K562 (cell line): ENCODE measurements at regions of chr19 and their contacts with region 1.

Region 1: GRCh38 chr19:7674010-7675005 is 2.6 kb upstream of the MCEMP1 start:
- DNase-seq: peak; percentile 79 to 90 (median 85)
- ATAC-seq: peak; percentile 98
- H3K4me3 ChIP-seq: no peak overlapping the region
- H3K27ac ChIP-seq: no peak overlapping the region
- H3K4me1 ChIP-seq: peaks cover 4 to 10% of the 10 kb centered on the region in 2 experiments; a peak in 3 of 5 replicates
- H3K27me3 ChIP-seq: peaks cover 9 to 29% of the 10 kb centered on the region in 2 experiments; a peak in 4 of 5 replicates
- CTCF ChIP-seq: no peak
- EP300 ChIP-seq: no peak
- POLR2A ChIP-seq: no peak
- RAD21 ChIP-seq: no peak

Region 2: DNA sequence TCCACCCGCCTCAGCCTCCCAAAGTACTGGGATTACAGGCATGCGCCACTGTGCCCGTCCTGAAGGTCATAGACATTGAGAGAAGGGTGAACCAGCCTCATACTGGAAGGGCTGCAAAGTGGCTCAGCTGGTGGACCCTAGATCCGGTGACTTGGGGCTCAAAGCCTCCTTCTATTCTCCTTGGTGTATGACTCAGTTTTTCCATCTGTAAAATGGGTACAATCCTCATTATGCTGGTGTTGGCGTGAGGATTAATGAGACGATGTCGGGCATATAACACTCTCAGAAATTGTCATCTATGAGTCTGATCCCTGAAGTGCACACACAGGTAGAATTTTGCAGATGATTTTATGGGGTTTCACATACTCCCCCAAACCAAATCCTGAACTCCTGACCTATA is 84.5 kb before region 1 on chr19:
- CTCF ChIA-PET with region 1: interaction called, 4 read pairs
- POLR2A ChIA-PET with region 1: no interaction called
- in situ Hi-C with region 1: loop called (anchors 5 kb)
- intact Hi-C with region 1: no loop called
- DNase-seq: no peak
- ATAC-seq: no peak
- H3K4me3 ChIP-seq: no peak overlapping the region
- H3K27ac ChIP-seq: no peak overlapping the region
- H3K4me1 ChIP-seq: peaks cover 0 to 9% of the 10 kb centered on the region in 2 experiments; a peak in 2 of 5 replicates
- H3K27me3 ChIP-seq: peaks cover 6 to 30% of the 10 kb centered on the region in 2 experiments; a peak in 3 of 5 replicates
- CTCF ChIP-seq: no peak
- EP300 ChIP-seq: no peak
- POLR2A ChIP-seq: no peak
- RAD21 ChIP-seq: no peak

Region 3: DNA sequence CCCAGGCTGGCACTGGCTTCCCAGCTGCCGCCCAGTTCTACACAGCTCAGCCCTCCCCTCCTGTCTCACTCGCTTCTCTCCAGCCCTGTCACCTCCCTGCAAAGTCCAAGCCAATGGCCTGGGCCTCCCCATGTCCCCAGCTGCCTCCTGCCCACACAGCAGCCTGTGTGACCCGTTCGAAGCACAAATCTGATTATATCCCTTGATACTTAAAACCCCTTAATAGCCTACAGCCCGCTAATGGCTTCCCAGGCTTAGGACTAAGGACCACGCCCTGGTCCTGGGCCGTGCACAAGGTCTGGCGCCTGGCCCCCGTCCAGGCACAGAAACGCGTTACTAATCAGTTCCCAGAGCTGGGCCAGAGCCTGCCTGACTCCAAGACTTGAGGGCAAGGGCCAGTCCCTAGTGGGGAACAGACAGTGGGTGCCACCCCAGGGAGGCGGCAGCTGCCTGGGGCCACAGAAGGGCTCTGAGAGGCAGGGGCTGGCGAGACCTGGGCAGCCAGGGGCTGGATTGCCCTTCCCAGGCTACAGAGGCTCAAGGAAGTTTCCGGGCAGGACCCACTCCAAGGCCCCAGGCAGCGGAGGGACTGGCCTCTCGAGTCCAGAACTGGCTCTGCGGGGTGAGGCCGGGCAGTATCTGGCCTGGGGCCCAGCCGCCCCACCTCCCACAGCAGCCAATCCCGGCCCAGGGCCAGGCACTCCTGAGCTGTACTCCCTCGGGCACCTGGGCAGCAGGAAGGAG is 55.4 kb before region 1 on chr19:
- CTCF ChIA-PET with region 1: no interaction called
- POLR2A ChIA-PET with region 1: no interaction called
- in situ Hi-C with region 1: no loop called
- intact Hi-C with region 1: no loop called
- DNase-seq: no peak
- ATAC-seq: peak; percentile 10
- H3K4me3 ChIP-seq: no peak overlapping the region
- H3K27ac ChIP-seq: no peak overlapping the region
- H3K4me1 ChIP-seq: peaks cover 2 to 64% of the 10 kb centered on the region in 2 experiments; a peak in 4 of 5 replicates
- H3K27me3 ChIP-seq: peaks cover 0 to 6% of the 10 kb centered on the region in 2 experiments; a peak in 1 of 5 replicates
- CTCF ChIP-seq: no peak
- EP300 ChIP-seq: no peak
- POLR2A ChIP-seq: no peak
- RAD21 ChIP-seq: no peak